ENCODE measurements at regions of chr17 and their contacts with region 1.

Region 1: DNA sequence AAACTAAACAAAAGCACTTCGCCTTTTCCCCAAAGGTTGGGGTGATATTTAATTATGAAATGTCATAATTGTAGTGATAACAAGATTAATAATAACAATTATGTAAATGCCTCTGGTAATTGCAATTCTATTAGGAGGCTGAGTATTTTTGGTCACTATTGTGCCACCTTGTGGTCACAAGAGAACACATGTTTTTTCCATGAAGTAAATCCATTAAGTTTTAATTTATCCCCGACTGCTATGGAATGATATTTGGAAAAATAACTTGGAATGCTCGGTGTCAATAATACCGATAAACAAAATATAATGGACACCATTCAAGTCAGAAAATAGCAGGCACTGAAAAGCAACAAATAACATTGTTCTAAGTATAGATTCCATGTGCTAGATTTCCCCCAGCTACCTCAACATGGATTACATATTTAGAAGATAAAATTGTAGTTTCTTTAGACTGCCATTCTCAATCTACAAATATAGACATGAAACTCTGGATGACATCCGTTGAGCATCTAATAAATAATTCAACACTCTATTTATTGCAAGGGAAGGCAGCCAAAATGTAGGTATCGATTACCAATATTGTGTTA is 25.0 kb upstream of the KCNJ2 start:
- DNase-seq: no peak
- H3K4me3 Mint-ChIP-seq: no peak overlapping the region
- H3K27ac Mint-ChIP-seq: no peak overlapping the region
- H3K4me1 Mint-ChIP-seq: no peaks in the 10 kb centered on the region
- H3K27me3 Mint-ChIP-seq: no peaks in the 10 kb centered on the region
- CTCF ChIP-seq: peak; percentile 39

Region 2: DNA sequence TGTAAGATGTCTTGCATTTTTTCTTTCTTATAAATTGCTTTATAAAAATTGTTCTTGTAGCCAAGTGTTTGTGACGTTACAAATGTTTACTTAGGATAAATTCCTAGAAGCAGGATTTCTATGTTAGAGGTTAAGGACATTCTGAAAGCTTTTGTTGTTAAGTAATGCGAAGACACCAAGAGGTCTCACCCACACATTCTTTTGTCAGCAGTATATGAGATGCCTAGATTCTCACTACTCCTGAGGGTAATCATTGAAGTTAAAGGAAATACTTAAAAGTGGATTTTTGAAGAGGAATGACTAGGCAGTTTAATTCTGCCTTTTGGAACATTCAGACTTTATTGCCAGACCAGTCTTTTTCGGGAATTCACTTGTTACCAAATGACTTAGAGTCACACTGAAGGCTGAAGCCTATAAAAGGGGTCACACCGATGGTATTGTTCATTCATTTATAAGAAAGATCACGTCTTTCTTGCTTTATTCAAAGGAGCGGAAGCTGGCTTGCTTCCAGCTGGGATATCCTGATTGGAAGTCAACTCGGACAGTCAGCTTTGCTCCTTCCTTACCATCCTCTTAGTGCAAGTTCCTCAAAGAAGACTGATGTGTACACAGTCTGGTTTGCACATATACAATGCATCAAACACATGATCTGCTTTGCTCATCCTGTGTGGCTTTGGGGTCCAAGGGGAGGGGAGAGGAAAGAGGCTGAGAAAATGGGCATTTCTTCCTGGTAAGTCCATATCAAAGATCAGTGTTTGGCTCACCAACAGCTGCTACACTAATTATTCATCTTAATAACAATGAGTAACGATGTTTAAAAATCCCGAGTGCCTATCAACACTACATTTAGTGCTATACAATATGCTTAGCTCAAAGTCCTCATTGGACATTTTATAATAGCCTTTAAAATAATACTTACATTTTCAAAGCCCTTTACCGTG is 569.8 kb before region 1 on chr17:
- CTCF ChIA-PET with region 1: no interaction called
- intact Hi-C with region 1: loop called (anchors 1 kb)
- DNase-seq: no peak
- H3K4me3 Mint-ChIP-seq: no peak overlapping the region
- H3K27ac Mint-ChIP-seq: no peak overlapping the region
- H3K4me1 Mint-ChIP-seq: no peaks in the 10 kb centered on the region
- H3K27me3 Mint-ChIP-seq: no peaks in the 10 kb centered on the region
- CTCF ChIP-seq: no peak

Region 3: GRCh38 chr17:69607162-69607834 is 537.1 kb before region 1 on chr17:
- CTCF ChIA-PET with region 1: no interaction called
- intact Hi-C with region 1: loop called (anchors 2 kb)
- DNase-seq: peak; percentile 21
- H3K4me3 Mint-ChIP-seq: no peak overlapping the region
- H3K27ac Mint-ChIP-seq: no peak overlapping the region
- H3K4me1 Mint-ChIP-seq: no peaks in the 10 kb centered on the region
- H3K27me3 Mint-ChIP-seq: no peaks in the 10 kb centered on the region
- CTCF ChIP-seq: peak; percentile 27

Region 4: DNA sequence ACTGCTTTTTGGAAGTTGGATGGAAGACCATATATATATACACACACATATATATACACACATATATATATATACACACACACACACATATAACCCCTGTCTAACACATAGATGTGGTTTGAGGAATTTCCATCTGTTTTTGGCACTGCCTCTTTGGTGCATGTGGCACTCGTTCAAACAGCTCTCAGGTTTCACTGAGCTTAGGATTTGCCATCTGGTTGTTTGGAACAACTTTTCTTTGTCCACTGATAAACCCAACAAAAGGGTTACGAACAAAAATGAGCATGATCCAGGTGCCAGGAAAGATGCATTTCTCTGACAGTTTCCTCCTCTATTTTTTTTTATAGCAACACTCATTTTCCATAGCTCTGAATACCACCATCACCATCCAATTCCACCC is 83.9 kb before region 1 on chr17:
- CTCF ChIA-PET with region 1: no interaction called
- intact Hi-C with region 1: no loop called
- DNase-seq: no peak
- H3K4me3 Mint-ChIP-seq: no peak overlapping the region
- H3K27ac Mint-ChIP-seq: no peak overlapping the region
- H3K4me1 Mint-ChIP-seq: no peaks in the 10 kb centered on the region
- H3K27me3 Mint-ChIP-seq: no peaks in the 10 kb centered on the region
- CTCF ChIP-seq: no peak

Region 5: DNA sequence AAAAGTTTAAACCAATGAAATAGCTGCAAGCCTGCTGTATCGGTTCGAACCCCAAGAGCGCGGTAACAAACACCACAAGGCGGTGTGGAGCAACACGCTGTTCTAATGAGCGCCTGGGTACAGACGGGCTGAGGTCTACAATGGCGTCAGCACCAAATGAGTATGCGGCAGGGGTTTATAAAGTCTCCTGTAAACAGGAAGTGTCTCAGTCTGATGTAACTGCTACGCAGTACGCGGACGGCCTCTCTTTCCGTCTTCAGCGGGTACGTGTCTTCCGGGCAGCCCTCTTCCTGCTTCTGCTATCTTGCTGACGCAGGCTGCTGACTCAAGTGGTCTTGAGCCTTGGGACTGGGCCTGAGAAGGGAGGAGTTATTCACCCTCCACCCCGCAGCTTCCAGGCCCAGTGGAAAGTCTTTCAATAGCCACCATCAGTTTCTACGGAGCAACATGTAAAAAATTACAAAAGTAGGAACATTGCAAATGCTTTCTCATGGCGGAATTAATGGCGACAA is 15.6 kb before region 1 on chr17:
- CTCF ChIA-PET with region 1: no interaction called
- intact Hi-C with region 1: no loop called
- DNase-seq: no peak
- H3K4me3 Mint-ChIP-seq: no peak overlapping the region
- H3K27ac Mint-ChIP-seq: no peak overlapping the region
- H3K4me1 Mint-ChIP-seq: no peaks in the 10 kb centered on the region
- H3K27me3 Mint-ChIP-seq: no peaks in the 10 kb centered on the region
- CTCF ChIP-seq: no peak

Measured in Calu3 (cell line).